Naive thymus-derived CD4-positive, alpha-beta T cell (primary cell): ENCODE measurements at regions of chr19 and their contacts with region 1.

Region 1: GRCh38 chr19:907183-907853 is 5.7 kb downstream of the R3HDM4 start:
- DNase-seq: peak in 2 of 9 donors; percentile 11 to 50
- ATAC-seq: peak; percentile 13
- H3K4me3 ChIP-seq: no peak overlapping the region
- H3K4me3 Mint-ChIP-seq: peak overlapping the region; percentile 26 to 91 (median 79)
- H3K27ac ChIP-seq: peak overlapping the region; percentile 95
- H3K27ac Mint-ChIP-seq: peak overlapping the region; percentile 100
- H3K4me1 ChIP-seq: peaks cover 34 to 42% of the 10 kb centered on the region in 2 donors
- H3K4me1 Mint-ChIP-seq: peaks cover 27 to 81% (median 52%) of the 10 kb centered on the region in 7 donors
- H3K27me3 ChIP-seq: no peaks in the 10 kb centered on the region
- H3K27me3 Mint-ChIP-seq: no peaks in the 10 kb centered on the region

Region 2: GRCh38 chr19:920051-920864 is 12.9 kb after region 1 on chr19:
- CTCF ChIA-PET with region 1: interaction called, 11 read pairs
- POLR2A ChIA-PET with region 1: interaction called, 31 read pairs
- intact Hi-C with region 1: loop called in 1 of 2 experiments (anchors 1 kb)
- DNase-seq: peak; percentile 61 to 77 (median 76)
- ATAC-seq: peak; percentile 70
- H3K4me3 ChIP-seq: peak overlapping the region; percentile 21
- H3K4me3 Mint-ChIP-seq: peak overlapping the region; percentile 74 to 91 (median 85)
- H3K27ac ChIP-seq: peak overlapping the region; percentile 64
- H3K27ac Mint-ChIP-seq: peak overlapping the region in 8 of 9 donors; percentile 51 to 97 (median 80)
- H3K4me1 ChIP-seq: peaks cover 9 to 15% of the 10 kb centered on the region in 2 donors
- H3K4me1 Mint-ChIP-seq: peaks cover 5 to 26% (median 18%) of the 10 kb centered on the region in 7 donors
- H3K27me3 ChIP-seq: no peaks in the 10 kb centered on the region
- H3K27me3 Mint-ChIP-seq: peaks cover 0 to 5% (median 0%) of the 10 kb centered on the region in 5 donors